ENCODE measurements at regions of chr7 and their contacts with region 1.

Region 1: DNA sequence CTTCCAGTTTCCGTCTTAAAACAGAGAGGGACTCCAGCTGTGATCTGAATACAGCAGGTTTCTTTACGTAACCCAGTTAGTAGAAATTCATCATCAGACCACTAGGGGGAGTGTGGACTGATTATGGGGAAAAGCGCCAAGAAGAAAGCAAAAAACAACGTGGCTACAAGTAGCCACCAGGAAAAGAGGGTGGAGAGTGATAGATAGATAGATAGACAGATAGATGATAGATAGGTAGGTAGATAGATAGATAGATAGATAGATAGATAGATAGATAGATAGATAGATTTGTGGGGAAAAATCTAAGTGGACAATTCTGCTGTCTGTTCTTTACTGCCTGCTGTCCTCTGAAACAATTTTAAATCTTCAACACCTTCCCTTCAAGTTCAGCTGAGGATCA is 12.7 kb upstream of the AKR1B10 start:
- DNase-seq: peak; percentile 85
- H3K4me3 ChIP-seq: no peak overlapping the region
- H3K27ac ChIP-seq: no peak overlapping the region
- H3K4me1 ChIP-seq: peaks cover 13% of the 10 kb centered on the region
- H3K27me3 ChIP-seq: no peaks in the 10 kb centered on the region
- CTCF ChIP-seq: peak; percentile 66 to 72
- POLR2A ChIP-seq: no peak

Region 2: GRCh38 chr7:134448700-134449229 is 65.9 kb before region 1 on chr7:
- CTCF ChIA-PET with region 1: interaction called, 12 read pairs
- POLR2A ChIA-PET with region 1: no interaction called
- dilution Hi-C with region 1: no loop called
- intact Hi-C with region 1: no loop called
- DNase-seq: peak; percentile 64
- H3K4me3 ChIP-seq: no peak overlapping the region
- H3K27ac ChIP-seq: peak overlapping the region; percentile 86
- H3K4me1 ChIP-seq: peaks cover 22% of the 10 kb centered on the region
- H3K27me3 ChIP-seq: no peaks in the 10 kb centered on the region
- CTCF ChIP-seq: no peak
- POLR2A ChIP-seq: no peak

Region 3: DNA sequence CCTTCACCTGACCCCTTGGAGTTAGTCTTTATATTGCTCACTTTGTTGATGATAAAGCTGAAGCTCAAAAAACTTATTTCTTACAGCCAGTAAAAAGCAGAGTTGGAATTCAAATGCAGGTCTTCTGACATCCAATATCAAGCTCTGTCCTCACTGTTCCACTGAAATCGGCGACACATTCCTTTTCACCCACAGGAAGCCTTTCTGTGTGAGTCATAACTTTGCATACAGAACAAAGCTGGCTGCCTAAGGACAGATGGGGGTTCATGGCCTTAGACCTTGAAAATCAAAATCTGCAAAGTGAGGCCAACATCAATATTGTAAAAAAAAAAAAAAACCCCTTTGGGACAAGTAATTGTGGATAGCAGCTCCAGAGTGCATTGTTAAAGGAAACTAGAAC is 33.9 kb before region 1 on chr7:
- CTCF ChIA-PET with region 1: interaction called, 13 read pairs
- POLR2A ChIA-PET with region 1: no interaction called
- dilution Hi-C with region 1: no loop called
- intact Hi-C with region 1: loop called (anchors 2 kb)
- DNase-seq: peak; percentile 71
- H3K4me3 ChIP-seq: no peak overlapping the region
- H3K27ac ChIP-seq: peak overlapping the region; percentile 9
- H3K4me1 ChIP-seq: peaks cover 16% of the 10 kb centered on the region
- H3K27me3 ChIP-seq: no peaks in the 10 kb centered on the region
- CTCF ChIP-seq: no peak
- POLR2A ChIP-seq: no peak

Region 4: DNA sequence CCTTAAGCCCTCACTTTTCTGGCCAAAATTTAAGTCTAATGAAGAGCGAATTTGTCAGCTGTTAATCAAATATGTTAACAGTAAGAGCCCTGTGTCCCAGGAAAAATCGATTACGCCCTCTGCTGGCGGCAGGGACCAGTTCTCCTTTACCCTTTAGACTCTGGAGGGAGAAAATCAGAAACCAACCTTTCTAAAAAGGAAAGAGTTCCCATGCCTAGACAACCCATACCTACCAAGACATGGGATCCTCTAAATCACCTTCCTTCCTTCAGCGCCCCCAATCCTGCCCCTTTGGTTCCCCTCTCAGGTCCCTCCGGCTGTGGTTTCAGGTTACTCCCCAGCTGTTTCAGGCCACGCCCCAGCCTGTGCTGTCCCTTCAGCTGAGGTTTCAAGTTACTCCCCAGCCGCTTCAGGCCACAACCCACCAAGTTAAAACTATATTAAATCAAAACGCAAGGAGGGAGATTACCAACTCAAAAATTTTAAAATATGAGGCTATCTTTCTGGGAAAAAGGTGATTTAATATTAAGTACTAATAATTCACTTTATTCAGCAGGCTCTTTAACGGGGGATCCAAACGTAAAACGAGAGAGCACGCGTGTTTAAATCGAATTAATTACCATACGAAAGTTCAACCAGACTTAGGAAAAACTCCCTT is 32.9 kb after region 1 on chr7:
- CTCF ChIA-PET with region 1: interaction called, 33 read pairs
- POLR2A ChIA-PET with region 1: no interaction called
- dilution Hi-C with region 1: no loop called
- intact Hi-C with region 1: loop called (anchors 1 kb)
- DNase-seq: peak; percentile 79
- H3K4me3 ChIP-seq: peak overlapping the region; percentile 21 to 70 (median 62)
- H3K27ac ChIP-seq: no peak overlapping the region
- H3K4me1 ChIP-seq: peaks cover 7% of the 10 kb centered on the region
- H3K27me3 ChIP-seq: peaks cover 10 to 15% of the 10 kb centered on the region in 2 experiments
- CTCF ChIP-seq: peak; percentile 78 to 90
- POLR2A ChIP-seq: no peak

Region 5: DNA sequence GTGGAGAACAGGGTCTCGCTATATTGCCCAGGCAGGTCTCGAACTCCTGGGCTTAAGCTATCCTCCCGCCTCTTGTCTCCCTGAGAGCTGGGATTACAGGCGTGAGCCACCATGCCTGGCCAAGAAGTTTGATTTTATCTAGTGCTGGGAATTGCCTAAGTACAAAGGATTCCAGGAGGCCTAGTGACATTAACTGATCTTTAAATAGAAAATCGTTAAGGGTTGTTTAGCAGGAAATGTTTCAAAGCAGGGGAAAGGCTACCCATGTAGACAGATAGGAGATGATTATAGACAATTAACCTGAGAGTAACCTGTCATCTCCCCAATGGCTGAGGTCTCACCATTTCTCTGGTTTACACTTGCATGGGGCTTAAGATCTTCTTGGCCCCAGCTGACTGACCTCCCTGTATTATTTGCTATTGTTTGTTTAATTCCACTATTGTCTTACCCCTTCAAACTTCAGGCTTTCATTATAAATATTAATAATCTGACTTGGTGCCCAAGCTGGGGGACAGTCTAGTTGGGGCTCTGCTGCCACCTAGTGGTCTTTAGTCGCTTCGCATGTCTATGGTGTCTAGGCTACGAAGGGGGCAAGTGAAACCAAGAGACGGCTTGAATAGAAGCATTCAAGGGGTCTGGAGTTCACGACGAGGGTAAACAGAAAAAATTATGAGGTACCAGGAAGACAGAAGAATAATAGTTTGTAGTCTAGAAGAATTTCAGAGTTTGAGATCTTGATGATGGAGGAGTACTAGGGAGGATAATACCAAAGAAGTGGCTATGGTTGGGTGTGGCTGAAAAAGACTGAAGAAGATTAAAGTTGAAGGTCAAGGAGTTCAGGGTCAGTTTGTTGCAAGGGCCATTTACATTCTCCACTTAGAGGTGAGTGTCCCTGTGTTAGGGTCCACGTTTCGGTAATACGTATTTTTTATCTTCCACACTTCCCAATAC is 91.6 kb after region 1 on chr7:
- CTCF ChIA-PET with region 1: interaction called, 70 read pairs
- POLR2A ChIA-PET with region 1: no interaction called
- dilution Hi-C with region 1: no loop called
- intact Hi-C with region 1: loop called (anchors 1 kb)
- DNase-seq: peak; percentile 80
- H3K4me3 ChIP-seq: no peak overlapping the region
- H3K27ac ChIP-seq: no peak overlapping the region
- H3K4me1 ChIP-seq: peaks cover 10% of the 10 kb centered on the region
- H3K27me3 ChIP-seq: no peaks in the 10 kb centered on the region
- CTCF ChIP-seq: peak; percentile 81 to 86
- POLR2A ChIP-seq: no peak